Aorta (tissue), 5 donors: ENCODE measurements at regions of chr1 and their contacts with region 1.

Region 1: GRCh38 chr1:164786980-164787833 is 228.2 kb downstream of the PBX1 start:
- DNase-seq: peak; percentile 86 to 92
- ATAC-seq: peak; percentile 90
- H3K4me3 ChIP-seq: no peak overlapping the region
- H3K27ac ChIP-seq: no peak overlapping the region
- H3K4me1 ChIP-seq: peaks cover 0 to 2% of the 10 kb centered on the region in 2 donors
- H3K27me3 ChIP-seq: no peaks in the 10 kb centered on the region

Region 2: DNA sequence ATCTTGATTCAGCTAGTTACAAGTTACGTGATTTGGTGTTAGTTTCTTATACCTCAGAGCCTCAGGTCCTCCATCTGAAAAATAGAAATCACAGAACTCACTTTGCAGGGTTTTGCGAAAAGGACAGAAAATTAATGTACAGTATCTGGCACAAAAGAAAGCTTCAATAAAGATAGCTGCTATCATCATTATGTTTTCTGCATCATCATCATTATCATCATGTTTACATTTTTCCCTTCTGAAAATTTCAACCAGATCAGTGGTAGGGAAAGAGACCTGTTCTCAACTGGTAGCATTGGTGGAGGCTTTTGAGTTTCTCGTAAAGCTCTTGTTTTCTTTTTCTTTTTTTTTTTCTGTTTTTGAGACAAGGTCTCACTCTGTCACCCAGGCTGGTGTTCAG is 402.9 kb before region 1 on chr1:
- intact Hi-C with region 1: no loop called
- DNase-seq: no peak
- ATAC-seq: no peak
- H3K4me3 ChIP-seq: no peak overlapping the region
- H3K27ac ChIP-seq: no peak overlapping the region
- H3K4me1 ChIP-seq: no peaks in the 10 kb centered on the region
- H3K27me3 ChIP-seq: no peaks in the 10 kb centered on the region

Region 3: DNA sequence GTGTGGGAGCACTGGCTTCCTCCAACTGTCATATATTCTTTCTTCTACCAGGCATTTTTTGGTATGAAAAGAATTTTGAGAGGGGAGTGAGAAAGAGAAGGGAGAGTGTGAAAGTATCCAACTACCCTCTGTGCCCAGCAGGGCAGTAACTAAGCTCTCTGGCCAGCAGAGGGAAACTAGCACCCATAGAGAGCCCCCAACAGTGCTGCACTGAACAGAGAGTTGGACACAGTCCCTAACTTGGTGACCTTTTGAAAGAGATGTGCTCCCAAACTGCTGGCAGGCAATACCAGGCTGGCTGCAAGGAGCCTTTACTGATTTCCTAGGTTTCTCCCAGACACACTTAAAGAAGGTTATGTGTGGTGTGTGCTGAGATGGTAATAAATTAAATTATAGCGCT is 347.0 kb before region 1 on chr1:
- intact Hi-C with region 1: loop called in 1 of 2 experiments (anchors 10 kb)
- DNase-seq: no peak
- ATAC-seq: peak; percentile 62
- H3K4me3 ChIP-seq: no peak overlapping the region
- H3K27ac ChIP-seq: no peak overlapping the region
- H3K4me1 ChIP-seq: peaks cover 0 to 5% of the 10 kb centered on the region in 2 donors
- H3K27me3 ChIP-seq: no peaks in the 10 kb centered on the region

Region 4: GRCh38 chr1:164495905-164496304 is 291.3 kb before region 1 on chr1:
- intact Hi-C with region 1: no loop called
- DNase-seq: no peak
- ATAC-seq: no peak
- H3K4me3 ChIP-seq: no peak overlapping the region
- H3K27ac ChIP-seq: no peak overlapping the region
- H3K4me1 ChIP-seq: peaks cover 0 to 3% of the 10 kb centered on the region in 2 donors
- H3K27me3 ChIP-seq: no peaks in the 10 kb centered on the region

Region 5: DNA sequence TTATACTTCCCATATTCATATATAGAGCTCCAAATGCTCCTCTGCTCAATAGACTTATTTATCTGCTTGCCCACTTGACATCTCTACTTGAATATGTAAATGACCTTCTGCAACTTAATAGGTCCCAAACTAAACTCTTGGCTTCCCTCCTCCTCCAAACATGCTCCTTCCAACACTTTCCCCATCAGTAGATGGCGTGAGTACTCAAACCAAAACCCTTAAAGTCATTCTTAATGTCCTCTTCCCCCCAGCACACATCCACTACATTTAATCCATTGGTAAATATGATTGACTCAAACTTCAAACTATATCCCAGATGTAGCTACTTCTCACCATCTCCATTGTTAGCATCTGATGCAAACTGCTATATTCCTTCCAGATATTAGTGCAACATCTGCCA is 276.8 kb before region 1 on chr1:
- intact Hi-C with region 1: loop called in 1 of 2 experiments (anchors 10 kb)
- DNase-seq: no peak
- ATAC-seq: no peak
- H3K4me3 ChIP-seq: no peak overlapping the region
- H3K27ac ChIP-seq: no peak overlapping the region
- H3K4me1 ChIP-seq: no peaks in the 10 kb centered on the region
- H3K27me3 ChIP-seq: no peaks in the 10 kb centered on the region

Region 6: GRCh38 chr1:164558461-164559341 is 228.5 kb before region 1 on chr1 and contains the start of gene PBX1:
- intact Hi-C with region 1: loop called (anchors 5 kb)
- DNase-seq: peak; percentile 97 to 98
- ATAC-seq: peak; percentile 98
- H3K4me3 ChIP-seq: peak within 1 kb of the TSS; percentile 95 to 96
- H3K27ac ChIP-seq: peak within 1 kb of the TSS; percentile 51 to 76
- H3K4me1 ChIP-seq: peaks cover 0 to 2% of the 10 kb centered on the region in 2 donors
- H3K27me3 ChIP-seq: no peaks in the 10 kb centered on the region
- total RNA-seq, gene PBX1: 61.8 to 125 TPM

Region 7: DNA sequence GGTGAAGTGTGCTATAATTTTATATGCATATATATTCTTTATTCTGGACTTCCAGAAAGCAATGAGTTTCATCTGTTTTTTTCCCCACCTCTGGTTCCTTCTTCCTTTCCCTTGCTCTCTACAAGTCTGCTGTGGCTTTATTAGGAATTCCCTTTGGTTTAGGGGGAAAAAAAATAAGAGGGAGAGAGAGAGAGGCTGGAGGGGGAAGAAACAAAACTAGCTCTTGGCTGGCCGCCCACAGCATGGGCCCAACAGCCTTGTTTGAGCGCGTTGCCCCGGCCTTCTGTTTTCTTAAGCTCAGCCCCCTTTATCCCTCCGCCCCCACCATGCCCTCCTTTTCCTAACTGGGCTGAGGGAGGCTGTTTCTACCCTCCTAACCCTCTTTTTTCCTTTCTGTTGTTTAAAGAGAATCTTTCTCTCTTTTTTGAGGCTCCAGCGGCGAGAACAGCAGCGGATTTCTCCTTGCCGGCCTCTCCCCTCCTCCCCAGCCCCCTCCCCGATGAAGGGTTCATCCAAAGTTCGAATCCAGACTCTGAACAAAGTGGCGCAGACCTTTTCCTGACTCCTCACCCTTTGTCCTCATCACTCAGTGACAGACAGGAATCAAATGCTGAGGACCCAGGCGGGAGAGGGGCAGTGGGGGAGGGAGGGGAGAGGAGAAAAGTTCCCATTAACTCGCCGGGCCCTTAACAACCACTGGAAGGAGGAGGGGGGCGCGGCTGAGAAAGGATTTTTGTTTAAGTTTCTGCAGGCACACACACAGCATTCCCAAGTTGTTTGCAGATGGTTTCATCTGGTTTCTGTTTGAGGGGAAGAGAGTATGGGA is 198.5 kb before region 1 on chr1:
- intact Hi-C with region 1: no loop called
- DNase-seq: peak; percentile 90 to 91
- ATAC-seq: peak; percentile 80
- H3K4me3 ChIP-seq: peak overlapping the region; percentile 1 to 9
- H3K27ac ChIP-seq: peak overlapping the region; percentile 22 to 38
- H3K4me1 ChIP-seq: peaks cover 5 to 13% of the 10 kb centered on the region in 2 donors
- H3K27me3 ChIP-seq: no peaks in the 10 kb centered on the region

Region 8: GRCh38 chr1:164637461-164638375 is 149.5 kb before region 1 on chr1:
- intact Hi-C with region 1: loop called in 1 of 2 experiments (anchors 10 kb)
- DNase-seq: no peak
- ATAC-seq: no peak
- H3K4me3 ChIP-seq: no peak overlapping the region
- H3K27ac ChIP-seq: peak overlapping the region in 1 of 2 donors; percentile 54
- H3K4me1 ChIP-seq: peaks cover 2 to 5% of the 10 kb centered on the region in 2 donors
- H3K27me3 ChIP-seq: no peaks in the 10 kb centered on the region